ENCODE measurements at regions of chrX and their contacts with region 1.

Region 1: GRCh38 chrX:154002215-154002719 is 17.4 kb downstream of the IRAK1 start:
- DNase-seq: peak; percentile 27
- ATAC-seq: peak; percentile 73
- H3K4me3 Mint-ChIP-seq: peak overlapping the region; percentile 77
- H3K27ac Mint-ChIP-seq: peak overlapping the region; percentile 85
- H3K4me1 Mint-ChIP-seq: peaks cover 49% of the 10 kb centered on the region
- H3K27me3 Mint-ChIP-seq: no peaks in the 10 kb centered on the region
- CTCF ChIP-seq: no peak

Region 2: DNA sequence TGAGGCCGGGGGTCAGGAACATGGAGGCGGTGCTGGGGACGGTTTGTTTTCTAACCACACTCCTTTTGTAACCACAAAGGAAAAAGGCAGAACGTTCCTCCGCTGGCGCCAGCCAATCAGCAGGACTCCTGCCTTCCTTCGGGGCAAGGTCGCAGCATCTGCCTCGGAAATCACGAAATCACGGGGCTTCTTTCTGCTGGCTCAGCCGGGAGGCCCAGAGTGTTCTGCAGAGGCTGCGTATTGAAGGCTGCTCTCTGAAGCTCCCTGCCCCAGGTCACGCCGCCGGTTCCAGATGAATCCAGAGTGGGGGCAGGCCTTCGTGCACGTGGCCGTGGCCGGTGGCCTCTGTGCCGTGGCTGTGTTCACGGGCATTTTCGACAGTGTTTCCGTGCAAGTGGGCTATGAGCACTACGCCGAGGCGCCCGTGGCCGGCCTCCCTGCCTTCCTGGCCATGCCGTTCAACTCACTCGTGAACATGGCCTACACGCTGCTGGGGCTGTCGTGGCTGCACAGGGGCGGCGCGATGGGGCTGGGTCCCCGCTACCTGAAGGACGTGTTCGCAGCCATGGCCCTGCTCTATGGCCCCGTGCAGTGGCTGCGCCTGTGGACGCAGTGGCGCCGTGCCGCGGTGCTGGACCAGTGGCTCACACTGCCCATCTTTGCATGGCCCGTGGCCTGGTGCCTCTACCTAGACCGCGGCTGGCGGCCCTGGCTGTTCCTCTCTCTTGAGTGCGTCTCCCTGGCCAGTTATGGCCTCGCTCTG is 20.3 kb before region 1 on chrX:
- CTCF ChIA-PET with region 1: interaction called, 3 read pairs
- POLR2A ChIA-PET with region 1: interaction called, 19 read pairs
- intact Hi-C with region 1: loop called (anchors 2 kb)
- DNase-seq: no peak
- ATAC-seq: no peak
- H3K4me3 Mint-ChIP-seq: peak overlapping the region; percentile 55
- H3K27ac Mint-ChIP-seq: peak overlapping the region; percentile 92
- H3K4me1 Mint-ChIP-seq: peaks cover 55% of the 10 kb centered on the region
- H3K27me3 Mint-ChIP-seq: no peaks in the 10 kb centered on the region
- CTCF ChIP-seq: no peak

Measured in activated B cell treated with CpG ODN at 0.5 μM for 24 hours (primary cell).